ENCODE measurements at regions of chr2 and their contacts with region 1.

Region 1: DNA sequence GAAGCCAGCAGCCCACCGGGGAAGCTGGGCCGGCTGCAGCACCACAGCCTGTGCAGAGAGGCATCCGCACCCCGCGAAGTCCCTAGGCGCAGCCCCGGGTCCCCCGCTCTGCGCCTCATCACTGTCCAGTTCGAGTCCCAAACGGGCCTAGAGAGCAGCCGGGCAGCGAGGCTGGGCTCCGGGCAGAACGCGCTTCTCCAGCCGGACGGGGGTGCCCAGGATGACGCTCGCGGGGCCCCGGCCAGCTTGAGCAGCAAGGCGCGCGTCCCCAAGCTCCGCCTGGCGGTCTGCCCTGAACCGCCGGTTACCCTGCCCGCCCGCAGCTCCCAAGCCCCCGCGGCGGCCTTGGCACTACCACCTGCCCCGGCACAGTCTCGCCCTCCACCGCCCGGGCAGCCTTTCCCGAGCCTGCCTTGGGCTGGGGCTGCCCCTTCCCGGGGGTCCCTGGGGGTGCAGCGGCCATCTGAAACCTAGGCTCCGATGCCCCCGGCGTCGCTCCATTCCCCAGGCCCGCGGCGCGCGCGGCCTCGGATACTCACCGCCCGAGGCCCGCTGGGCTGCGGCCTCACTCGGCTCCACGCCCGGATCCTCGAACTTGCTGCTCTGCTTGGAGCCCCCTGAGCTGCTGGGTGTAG is 591 bp downstream of the SLC16A14 start:
- DNase-seq: peak; percentile 58
- ATAC-seq: peak; percentile 32
- H3K4me3 Mint-ChIP-seq: peak overlapping the region; percentile 90
- H3K27ac Mint-ChIP-seq: peak overlapping the region; percentile 70
- H3K4me1 Mint-ChIP-seq: peaks cover 18% of the 10 kb centered on the region
- H3K27me3 Mint-ChIP-seq: peaks cover 5% of the 10 kb centered on the region
- CTCF ChIP-seq: no peak

Region 2: DNA sequence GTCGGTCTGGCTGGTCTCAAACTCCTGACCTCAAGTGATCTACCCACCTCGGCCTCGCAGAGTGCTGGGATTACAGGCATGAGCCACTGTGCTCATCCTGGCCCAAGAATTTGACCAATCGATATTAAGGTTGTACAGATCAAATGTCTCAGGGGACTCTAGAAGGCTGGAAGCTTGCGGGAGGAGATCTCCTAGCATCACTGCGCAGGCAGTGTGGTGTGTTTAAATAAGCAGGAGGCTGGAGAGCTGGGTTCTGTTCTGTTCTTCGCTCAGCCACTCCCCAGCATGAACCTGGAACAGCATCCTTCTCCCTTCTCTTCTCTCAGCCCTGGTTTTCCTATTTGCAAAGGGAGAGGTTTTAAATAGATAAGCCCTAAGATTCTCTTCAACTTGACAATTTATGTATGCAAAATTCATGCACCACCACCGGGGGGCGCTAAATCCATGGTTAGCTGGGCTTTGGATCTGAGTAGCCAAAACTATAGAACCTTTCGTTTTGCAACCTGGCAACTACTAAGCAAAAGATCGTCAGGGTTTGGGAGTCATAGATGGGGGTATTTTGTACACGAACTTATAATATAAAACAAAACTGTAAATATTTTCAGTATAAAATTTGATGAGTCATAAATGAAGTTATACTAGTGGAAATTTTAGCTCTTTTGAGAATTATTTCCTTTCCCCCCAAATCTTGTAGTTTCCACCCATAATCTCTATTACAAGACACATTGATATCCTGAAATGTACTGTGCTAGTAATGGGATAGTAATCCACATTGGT is 60.0 kb before region 1 on chr2:
- CTCF ChIA-PET with region 1: interaction called, 6 read pairs
- POLR2A ChIA-PET with region 1: no interaction called
- intact Hi-C with region 1: loop called (anchors 1 kb)
- DNase-seq: peak; percentile 63
- ATAC-seq: peak; percentile 75
- H3K4me3 Mint-ChIP-seq: no peak overlapping the region
- H3K27ac Mint-ChIP-seq: no peak overlapping the region
- H3K4me1 Mint-ChIP-seq: peaks cover 3% of the 10 kb centered on the region
- H3K27me3 Mint-ChIP-seq: no peaks in the 10 kb centered on the region
- CTCF ChIP-seq: peak; percentile 54

Region 3: GRCh38 chr2:230018153-230018552 is 50.0 kb before region 1 on chr2:
- CTCF ChIA-PET with region 1: no interaction called
- POLR2A ChIA-PET with region 1: no interaction called
- intact Hi-C with region 1: no loop called
- DNase-seq: no peak
- ATAC-seq: no peak
- H3K4me3 Mint-ChIP-seq: no peak overlapping the region
- H3K27ac Mint-ChIP-seq: no peak overlapping the region
- H3K4me1 Mint-ChIP-seq: no peaks in the 10 kb centered on the region
- H3K27me3 Mint-ChIP-seq: no peaks in the 10 kb centered on the region
- CTCF ChIP-seq: no peak

Region 4: GRCh38 chr2:230160112-230160660 is 92.1 kb after region 1 on chr2:
- CTCF ChIA-PET with region 1: interaction called, 26 read pairs
- POLR2A ChIA-PET with region 1: interaction called, 6 read pairs
- intact Hi-C with region 1: loop called (anchors 1 kb)
- DNase-seq: peak; percentile 34
- ATAC-seq: peak; percentile 42
- H3K4me3 Mint-ChIP-seq: no peak overlapping the region
- H3K27ac Mint-ChIP-seq: no peak overlapping the region
- H3K4me1 Mint-ChIP-seq: peaks cover 24% of the 10 kb centered on the region
- H3K27me3 Mint-ChIP-seq: no peaks in the 10 kb centered on the region
- CTCF ChIP-seq: no peak

Region 5: GRCh38 chr2:230798769-230799399 is 730.8 kb after region 1 on chr2:
- CTCF ChIA-PET with region 1: interaction called, 9 read pairs
- POLR2A ChIA-PET with region 1: interaction called, 4 read pairs
- intact Hi-C with region 1: loop called (anchors 1 kb)
- DNase-seq: no peak
- ATAC-seq: peak; percentile 46
- H3K4me3 Mint-ChIP-seq: no peak overlapping the region
- H3K27ac Mint-ChIP-seq: no peak overlapping the region
- H3K4me1 Mint-ChIP-seq: peaks cover 14% of the 10 kb centered on the region
- H3K27me3 Mint-ChIP-seq: no peaks in the 10 kb centered on the region
- CTCF ChIP-seq: no peak